HAP-1 (cell line): ENCODE measurements at regions of chr5 and their contacts with region 1.

Region 1: DNA sequence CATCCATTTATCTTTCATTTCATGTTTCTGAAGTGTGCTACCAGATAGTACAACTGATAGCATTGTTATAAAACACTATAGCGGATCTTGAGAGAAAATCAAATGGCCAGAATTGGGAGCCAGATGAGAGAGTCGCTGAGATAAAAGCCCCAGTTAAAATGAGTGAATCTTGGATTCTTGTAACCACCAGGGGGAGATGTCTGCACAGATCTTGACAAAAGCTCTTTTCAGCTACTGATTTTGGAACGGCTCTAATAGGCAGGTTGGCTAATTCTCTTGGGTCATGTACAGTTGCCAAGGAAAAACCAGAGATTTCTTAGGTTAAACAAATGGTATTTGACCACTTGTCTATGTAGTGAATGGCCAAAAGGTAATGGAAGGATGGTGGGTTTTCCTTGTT is 21.7 kb downstream of the F2RL2 start:
- DNase-seq: peak; percentile 49 to 73
- H3K4me3 ChIP-seq: no peak overlapping the region
- H3K4me1 ChIP-seq: no peaks in the 10 kb centered on the region; the same call in 1 of the 2 replicates
- H3K27me3 ChIP-seq: no peaks in the 10 kb centered on the region

Region 2: GRCh38 chr5:76766746-76767145 is 165.3 kb after region 1 on chr5:
- in situ Hi-C with region 1: loop called (anchors 10 kb)
- DNase-seq: no peak
- H3K4me3 ChIP-seq: no peak overlapping the region
- H3K4me1 ChIP-seq: no peaks in the 10 kb centered on the region
- H3K27me3 ChIP-seq: no peaks in the 10 kb centered on the region